K562 (cell line): ENCODE measurements at regions of chr2 and their contacts with region 1.

Region 1: GRCh38 chr2:171160119-171160955 is at the start of gene TLK1:
- DNase-seq: peak; percentile 64 to 88 (median 80)
- ATAC-seq: peak; percentile 75
- H3K4me3 ChIP-seq: peak within 1 kb of the TSS; percentile 81
- H3K27ac ChIP-seq: peak within 1 kb of the TSS; percentile 92
- H3K4me1 ChIP-seq: peaks cover 10 to 39% of the 10 kb centered on the region in 2 experiments
- H3K27me3 ChIP-seq: no peaks in the 10 kb centered on the region
- CTCF ChIP-seq: peak in 2 of 3 experiments; percentile 39 to 41; a peak in 3 of 6 replicates
- EP300 ChIP-seq: no peak
- POLR2A ChIP-seq: peak; percentile 77
- RAD21 ChIP-seq: peak; percentile 22 to 29; a peak in 3 of 4 replicates
- polyA plus RNA-seq, gene TLK1: 40.5 to 92.0 TPM

Region 2: DNA sequence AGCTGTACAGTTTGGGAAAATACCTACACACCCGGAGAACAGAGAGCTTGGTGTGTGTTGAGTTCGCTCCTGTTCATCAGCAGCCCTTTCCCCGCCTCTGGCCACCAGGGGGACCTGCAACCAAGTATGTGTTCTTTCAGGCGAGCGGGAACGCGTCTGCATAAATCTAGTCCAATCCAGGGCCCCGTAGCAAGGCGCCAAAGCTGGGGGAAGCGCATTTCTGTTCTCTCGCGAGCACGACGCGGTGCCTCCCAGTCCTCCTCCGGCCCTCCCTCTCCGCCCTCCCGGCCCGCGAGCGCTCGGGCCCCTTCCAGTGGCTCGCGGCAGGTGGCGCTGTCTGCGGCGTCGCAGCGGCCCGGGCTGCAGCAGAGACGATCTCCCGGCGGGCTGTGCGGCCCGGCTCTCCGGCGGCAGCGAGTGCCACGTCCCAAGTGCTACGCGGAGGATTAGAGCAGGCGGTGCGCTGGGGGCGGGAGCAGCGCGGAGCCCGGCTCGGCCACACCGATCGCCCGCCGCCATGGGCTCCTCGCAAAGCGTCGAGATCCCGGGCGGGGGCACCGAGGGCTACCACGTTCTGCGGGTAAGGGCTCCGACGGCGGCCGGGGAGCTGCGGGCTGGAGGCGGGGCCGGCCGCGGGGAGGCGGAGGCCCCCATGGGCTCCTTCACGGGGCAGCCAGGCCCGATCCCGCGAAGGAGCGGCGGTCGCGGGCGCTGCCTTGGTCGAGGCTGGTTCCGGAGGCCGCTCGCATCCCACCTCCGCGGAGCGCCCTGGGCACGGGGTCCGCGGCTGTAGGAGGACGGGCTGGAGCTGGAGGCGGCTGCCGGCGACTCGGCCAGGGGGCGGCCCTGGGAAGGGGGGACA is 231.3 kb before region 1 on chr2 and contains the start of gene GORASP2:
- CTCF ChIA-PET with region 1: no interaction called
- POLR2A ChIA-PET with region 1: interaction called, 5 read pairs
- in situ Hi-C with region 1: no loop called
- intact Hi-C with region 1: loop called (anchors 2 kb)
- DNase-seq: peak; percentile 98 to 100 (median 98)
- ATAC-seq: peak; percentile 94
- H3K4me3 ChIP-seq: peak within 1 kb of the TSS; percentile 81
- H3K27ac ChIP-seq: peak within 1 kb of the TSS; percentile 95
- H3K4me1 ChIP-seq: peaks cover 13 to 26% of the 10 kb centered on the region in 2 experiments; a peak in 4 of 5 replicates
- H3K27me3 ChIP-seq: no peaks in the 10 kb centered on the region
- CTCF ChIP-seq: peak in 2 of 3 experiments; percentile 93 to 99; a peak in 5 of 6 replicates
- EP300 ChIP-seq: peak; percentile 38
- POLR2A ChIP-seq: peak; percentile 96
- RAD21 ChIP-seq: peak; percentile 69 to 72
- polyA plus RNA-seq, gene GORASP2: 27.4 to 29.9 TPM

Region 3: GRCh38 chr2:171086352-171087290 is 73.7 kb before region 1 on chr2:
- CTCF ChIA-PET with region 1: no interaction called
- POLR2A ChIA-PET with region 1: interaction called, 4 read pairs
- in situ Hi-C with region 1: no loop called
- intact Hi-C with region 1: loop called (anchors 2 kb)
- DNase-seq: peak; percentile 37 to 75 (median 58)
- ATAC-seq: peak; percentile 82
- H3K4me3 ChIP-seq: no peak overlapping the region
- H3K27ac ChIP-seq: peak overlapping the region; percentile 19; the same call in 1 of the 3 replicates
- H3K4me1 ChIP-seq: peaks cover 0 to 21% of the 10 kb centered on the region in 2 experiments; a peak in 2 of 5 replicates
- H3K27me3 ChIP-seq: no peaks in the 10 kb centered on the region
- CTCF ChIP-seq: peak; percentile 56 to 78 (median 70)
- EP300 ChIP-seq: peak; percentile 47; the same call in 1 of the 2 replicates
- POLR2A ChIP-seq: no peak
- RAD21 ChIP-seq: peak; percentile 53 to 54

Region 4: GRCh38 chr2:171173089-171173488 is 12.8 kb after region 1 on chr2:
- CTCF ChIA-PET with region 1: no interaction called
- POLR2A ChIA-PET with region 1: interaction called, 118 read pairs
- in situ Hi-C with region 1: no loop called
- intact Hi-C with region 1: no loop called
- DNase-seq: no peak
- ATAC-seq: peak; percentile 29; the same call in 1 of the 3 replicates
- H3K4me3 ChIP-seq: no peak overlapping the region
- H3K27ac ChIP-seq: no peak overlapping the region
- H3K4me1 ChIP-seq: no peaks in the 10 kb centered on the region
- H3K27me3 ChIP-seq: no peaks in the 10 kb centered on the region
- CTCF ChIP-seq: no peak
- EP300 ChIP-seq: no peak
- POLR2A ChIP-seq: no peak
- RAD21 ChIP-seq: no peak

Region 5: DNA sequence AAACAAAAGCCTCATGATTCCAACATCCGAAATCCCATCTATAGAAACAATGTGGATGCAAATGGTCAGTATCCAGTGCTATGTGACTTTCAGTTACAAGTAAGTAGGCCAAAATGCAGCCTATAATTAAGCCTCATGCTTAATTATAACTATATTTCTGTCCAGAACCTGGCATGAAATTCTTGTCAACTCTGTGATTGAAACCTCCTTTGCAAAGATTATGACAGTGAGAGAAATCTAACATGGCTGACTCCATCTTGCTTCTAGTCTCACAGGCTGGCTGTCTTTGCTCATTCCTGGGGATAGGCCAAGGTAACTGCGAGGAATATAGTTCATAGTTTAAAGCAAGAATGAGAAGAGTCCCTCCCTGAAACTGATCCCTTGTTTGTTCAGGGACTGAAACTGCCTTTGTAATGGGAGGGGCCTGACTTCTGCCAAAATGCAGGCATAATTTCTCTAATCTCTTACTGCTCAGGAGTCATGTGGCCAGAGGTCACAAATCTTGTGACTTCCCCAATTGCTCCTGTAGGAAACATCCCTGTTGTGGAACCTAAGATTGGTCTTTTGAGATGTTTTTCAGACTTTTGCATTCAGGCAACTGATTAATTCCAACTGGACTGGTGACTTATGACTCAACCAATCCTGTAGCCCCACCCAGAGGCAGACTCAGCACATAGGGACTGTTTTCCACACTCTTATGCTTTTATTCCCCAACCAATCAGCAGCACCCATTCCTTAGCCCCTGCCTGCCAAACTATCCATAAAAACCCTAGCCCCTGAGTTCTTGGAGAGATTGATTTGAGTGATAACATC is 84.8 kb after region 1 on chr2:
- CTCF ChIA-PET with region 1: no interaction called
- POLR2A ChIA-PET with region 1: interaction called, 3 read pairs
- in situ Hi-C with region 1: no loop called
- intact Hi-C with region 1: loop called (anchors 1 kb)
- DNase-seq: peak in 1 of 4 experiments; percentile 66
- ATAC-seq: peak; percentile 72
- H3K4me3 ChIP-seq: no peak overlapping the region
- H3K27ac ChIP-seq: peak overlapping the region; percentile 65; the same call in 2 of the 3 replicates
- H3K4me1 ChIP-seq: peaks cover 0 to 21% of the 10 kb centered on the region in 2 experiments; a peak in 4 of 5 replicates
- H3K27me3 ChIP-seq: no peaks in the 10 kb centered on the region
- CTCF ChIP-seq: peak; percentile 41 to 62 (median 46); a peak in 5 of 6 replicates
- EP300 ChIP-seq: peak; percentile 72
- POLR2A ChIP-seq: no peak
- RAD21 ChIP-seq: peak; percentile 60 to 79

Region 6: DNA sequence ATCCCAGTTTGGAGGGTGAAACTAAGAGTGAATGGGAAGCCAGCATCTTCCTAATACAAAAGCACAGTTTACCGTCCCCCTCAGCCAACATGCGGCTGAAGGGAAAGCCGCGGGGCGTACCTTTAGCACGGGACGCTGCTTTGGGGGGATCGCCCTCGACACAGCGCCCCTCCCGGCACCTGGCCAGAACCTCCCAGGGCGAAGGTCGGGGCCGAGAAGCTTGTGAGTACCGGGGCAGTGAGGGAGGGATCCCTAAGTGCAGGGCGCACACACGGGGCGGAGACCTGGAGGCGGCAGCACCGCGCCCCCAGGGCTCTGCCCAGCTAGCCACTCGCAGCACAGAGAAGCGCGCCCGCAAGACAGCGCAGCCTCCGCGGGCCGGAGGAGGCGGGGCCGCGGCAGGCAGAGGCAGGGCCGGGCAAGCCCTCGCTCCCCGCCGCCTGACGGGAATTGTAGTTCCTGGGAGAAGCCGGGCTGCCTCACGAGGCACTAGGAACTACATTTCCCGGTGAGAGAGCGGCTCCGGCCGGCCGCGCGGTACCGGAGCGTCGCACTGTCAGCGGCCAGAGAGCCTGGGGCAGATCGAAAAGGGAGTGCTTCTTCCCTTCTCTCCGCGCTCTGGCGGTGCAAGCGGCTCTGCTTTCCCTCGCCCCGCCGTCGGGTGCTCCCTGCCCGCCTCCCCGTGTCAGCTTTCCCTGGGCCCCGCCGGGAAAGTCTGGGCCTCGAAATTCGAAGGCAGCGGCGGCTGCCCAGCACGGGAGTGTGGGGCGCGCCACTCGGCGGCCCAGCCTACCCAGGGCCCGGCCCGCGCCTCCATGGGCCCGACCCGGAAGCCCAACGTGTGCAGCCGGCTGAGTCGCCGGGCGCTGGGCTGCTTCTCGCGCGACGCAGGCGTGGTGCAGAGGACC is 273.7 kb after region 1 on chr2 and contains the starts of genes DCAF17 and METTL8:
- CTCF ChIA-PET with region 1: interaction called, 3 read pairs
- POLR2A ChIA-PET with region 1: interaction called, 4 read pairs
- in situ Hi-C with region 1: no loop called
- intact Hi-C with region 1: loop called (anchors 5 kb)
- DNase-seq: peak; percentile 95 to 99 (median 96)
- ATAC-seq: peak; percentile 97
- H3K4me3 ChIP-seq: peak within 1 kb of the TSS; percentile 86
- H3K27ac ChIP-seq: peak within 1 kb of the TSS; percentile 94
- H3K4me1 ChIP-seq: peaks cover 13 to 18% of the 10 kb centered on the region in 2 experiments
- H3K27me3 ChIP-seq: no peaks in the 10 kb centered on the region
- CTCF ChIP-seq: peak; percentile 92 to 93 (median 92)
- EP300 ChIP-seq: peak; percentile 34; the same call in 1 of the 2 replicates
- POLR2A ChIP-seq: peak; percentile 96
- RAD21 ChIP-seq: peak; percentile 13 to 45; a peak in 3 of 4 replicates
- polyA plus RNA-seq, gene DCAF17: 10.0 to 12.0 TPM
- polyA plus RNA-seq, gene METTL8: 12.9 to 16.7 TPM